ENCODE measurements at regions of chr5 and their contacts with region 1.

Region 1: DNA sequence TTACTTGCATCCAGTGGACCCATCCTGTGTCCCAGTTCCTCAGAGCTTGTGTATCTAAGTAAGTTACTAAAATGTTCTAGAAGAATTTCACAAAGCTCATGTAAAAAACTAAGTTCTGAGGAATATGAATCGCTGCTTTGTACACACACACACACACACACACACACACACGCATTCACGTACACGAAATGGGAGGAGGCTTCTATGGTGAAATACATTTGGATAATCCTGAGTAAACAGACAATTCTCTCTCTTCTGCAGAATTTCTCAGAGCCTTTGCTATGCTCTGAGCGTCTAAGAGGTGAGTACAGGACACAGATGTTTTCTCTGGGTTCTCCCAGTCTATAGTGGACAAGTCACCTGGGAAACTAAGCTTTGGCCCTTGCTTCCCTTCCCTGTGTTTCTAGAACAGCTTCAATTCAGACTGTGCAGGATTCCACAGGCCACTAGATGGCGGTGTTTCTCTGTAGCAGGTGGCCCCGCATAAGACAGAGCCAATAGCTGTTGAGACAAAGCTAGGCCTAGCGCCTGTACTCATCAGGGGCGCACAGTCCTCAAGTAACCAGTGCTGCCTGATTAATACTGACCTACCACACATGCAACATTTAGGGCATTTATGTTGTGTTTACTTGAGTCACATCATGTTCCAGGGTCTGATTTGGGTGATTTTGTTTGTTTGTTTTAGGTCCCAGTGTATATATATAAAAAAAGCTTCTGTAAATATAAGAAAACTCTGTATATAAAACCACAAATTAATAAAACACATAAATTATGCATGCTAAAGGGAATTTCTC is 114.8 kb downstream of the LIFR start:
- DNase-seq: no peak
- H3K4me3 ChIP-seq: no peak overlapping the region
- CTCF ChIP-seq: peak; percentile 91

Region 2: GRCh38 chr5:38373743-38374142 is 67.9 kb before region 1 on chr5:
- CTCF ChIA-PET with region 1: no interaction called
- POLR2A ChIA-PET with region 1: no interaction called
- DNase-seq: peak; percentile 7
- H3K4me3 ChIP-seq: no peak overlapping the region
- CTCF ChIP-seq: no peak

Region 3: GRCh38 chr5:38426986-38427950 is 14.4 kb before region 1 on chr5:
- CTCF ChIA-PET with region 1: interaction called, 81 read pairs
- POLR2A ChIA-PET with region 1: no interaction called
- DNase-seq: no peak
- H3K4me3 ChIP-seq: no peak overlapping the region
- CTCF ChIP-seq: no peak

Region 4: DNA sequence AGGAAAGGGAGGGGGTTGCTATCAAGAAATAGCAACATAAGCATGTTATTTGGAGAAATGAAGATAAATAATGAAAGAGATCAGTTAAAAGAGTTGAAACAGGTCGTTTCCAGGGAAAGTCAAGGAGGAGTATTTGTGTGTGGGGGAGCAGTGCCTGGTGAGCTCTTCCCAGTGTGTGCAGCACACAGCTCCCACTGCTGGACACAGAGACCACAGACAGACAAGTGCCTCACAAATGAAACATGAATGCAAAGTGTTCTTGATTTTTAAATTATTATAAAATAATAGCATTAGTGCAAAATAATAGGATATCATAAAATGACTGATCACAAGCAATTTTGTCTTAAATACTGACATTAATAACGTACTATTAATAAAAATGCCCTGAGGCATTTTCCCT is 74.0 kb after region 1 on chr5:
- CTCF ChIA-PET with region 1: interaction called, 31 read pairs
- POLR2A ChIA-PET with region 1: no interaction called
- DNase-seq: no peak
- H3K4me3 ChIP-seq: no peak overlapping the region
- CTCF ChIP-seq: peak; percentile 57

Region 5: DNA sequence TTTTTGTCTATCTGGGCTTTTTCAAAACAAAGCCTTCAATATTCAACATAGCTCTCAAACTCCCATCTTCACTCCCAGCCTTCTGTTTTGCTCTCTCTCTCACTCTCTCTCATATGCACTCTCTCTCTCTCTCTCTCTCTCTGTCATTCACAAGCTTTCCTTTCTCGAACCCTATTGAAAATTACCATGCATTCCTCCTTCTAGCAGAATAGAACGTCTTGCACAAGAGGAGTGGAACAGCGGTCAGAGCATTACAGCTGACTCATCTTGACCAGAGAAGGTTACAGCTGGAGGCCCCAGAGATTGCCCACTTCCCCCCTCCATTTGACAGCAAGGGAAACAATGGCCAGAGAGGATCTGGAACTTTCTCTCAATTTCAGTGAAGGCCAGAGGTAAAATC is 165.7 kb after region 1 on chr5:
- CTCF ChIA-PET with region 1: interaction called, 12 read pairs
- POLR2A ChIA-PET with region 1: no interaction called
- DNase-seq: peak; percentile 59
- H3K4me3 ChIP-seq: no peak overlapping the region
- CTCF ChIP-seq: no peak

Region 6: GRCh38 chr5:38795986-38796741 is 354.5 kb after region 1 on chr5:
- CTCF ChIA-PET with region 1: interaction called, 19 read pairs
- POLR2A ChIA-PET with region 1: no interaction called
- DNase-seq: no peak
- H3K4me3 ChIP-seq: no peak overlapping the region
- CTCF ChIP-seq: no peak

Region 7: GRCh38 chr5:38827525-38827924 is 385.9 kb after region 1 on chr5:
- CTCF ChIA-PET with region 1: interaction called, 10 read pairs
- POLR2A ChIA-PET with region 1: no interaction called
- DNase-seq: no peak
- H3K4me3 ChIP-seq: no peak overlapping the region
- CTCF ChIP-seq: no peak